Activated CD4-positive, alpha-beta memory T cell treated with anti-CD3 and anti-CD28 coated beads for 36 hours (primary cell): ENCODE measurements at regions of chr1 and their contacts with region 1.

Region 1: GRCh38 chr1:98813738-98814309 is 152.3 kb downstream of the SNX7 start:
- DNase-seq: no peak
- H3K4me3 Mint-ChIP-seq: peak overlapping the region; percentile 3
- H3K27ac Mint-ChIP-seq: peak overlapping the region; percentile 15
- H3K4me1 Mint-ChIP-seq: peaks cover 16% of the 10 kb centered on the region
- H3K27me3 Mint-ChIP-seq: no peaks in the 10 kb centered on the region

Region 2: DNA sequence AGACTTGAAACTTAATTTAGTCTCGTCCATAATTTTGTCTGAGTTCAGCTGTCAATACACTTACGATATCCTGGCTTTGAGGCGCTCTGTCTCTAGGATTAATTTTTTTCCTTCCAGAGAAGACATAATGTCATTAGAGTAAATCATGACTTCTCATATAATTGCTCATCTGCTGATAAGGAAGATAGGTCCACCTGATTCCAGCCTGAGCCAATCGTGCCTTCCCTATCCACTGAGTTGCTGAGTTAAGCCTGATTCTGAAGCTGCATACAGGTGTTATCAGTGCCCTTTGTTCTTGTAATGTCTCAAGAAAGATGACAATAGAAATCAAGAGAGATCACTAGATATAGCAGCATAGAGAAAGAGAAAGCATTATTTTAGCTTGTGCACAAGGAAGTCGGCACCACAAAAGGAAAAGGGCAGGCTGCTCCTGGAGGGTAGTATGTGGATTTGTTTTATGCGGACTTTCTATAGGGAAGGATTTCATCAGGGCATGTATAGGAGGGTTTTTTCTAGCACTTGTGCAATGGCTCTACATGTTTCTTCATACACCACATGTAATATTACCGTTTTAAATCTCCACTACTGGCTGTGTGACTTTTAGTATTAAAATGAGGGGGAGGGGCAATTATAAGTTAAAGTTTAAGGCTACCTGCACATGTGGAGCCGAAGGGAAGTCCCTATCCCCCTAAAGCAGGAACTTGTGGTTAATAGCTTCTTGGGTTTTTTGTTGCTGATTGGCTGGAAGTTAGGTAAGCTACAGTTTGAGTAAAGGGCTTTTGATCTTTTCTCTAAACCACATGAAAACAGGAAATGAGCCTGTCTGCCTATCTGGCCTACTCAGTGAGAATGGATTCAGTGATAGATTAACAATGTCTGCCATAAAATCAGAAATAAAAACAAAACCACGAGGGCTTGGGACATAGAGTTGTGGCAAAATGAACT is 57.4 kb after region 1 on chr1:
- CTCF ChIA-PET with region 1: no interaction called
- POLR2A ChIA-PET with region 1: no interaction called
- intact Hi-C with region 1: loop called (anchors 1 kb)
- DNase-seq: peak; percentile 31
- H3K4me3 Mint-ChIP-seq: peak overlapping the region; percentile 65
- H3K27ac Mint-ChIP-seq: peak overlapping the region; percentile 94
- H3K4me1 Mint-ChIP-seq: peaks cover 21% of the 10 kb centered on the region
- H3K27me3 Mint-ChIP-seq: no peaks in the 10 kb centered on the region

Region 3: DNA sequence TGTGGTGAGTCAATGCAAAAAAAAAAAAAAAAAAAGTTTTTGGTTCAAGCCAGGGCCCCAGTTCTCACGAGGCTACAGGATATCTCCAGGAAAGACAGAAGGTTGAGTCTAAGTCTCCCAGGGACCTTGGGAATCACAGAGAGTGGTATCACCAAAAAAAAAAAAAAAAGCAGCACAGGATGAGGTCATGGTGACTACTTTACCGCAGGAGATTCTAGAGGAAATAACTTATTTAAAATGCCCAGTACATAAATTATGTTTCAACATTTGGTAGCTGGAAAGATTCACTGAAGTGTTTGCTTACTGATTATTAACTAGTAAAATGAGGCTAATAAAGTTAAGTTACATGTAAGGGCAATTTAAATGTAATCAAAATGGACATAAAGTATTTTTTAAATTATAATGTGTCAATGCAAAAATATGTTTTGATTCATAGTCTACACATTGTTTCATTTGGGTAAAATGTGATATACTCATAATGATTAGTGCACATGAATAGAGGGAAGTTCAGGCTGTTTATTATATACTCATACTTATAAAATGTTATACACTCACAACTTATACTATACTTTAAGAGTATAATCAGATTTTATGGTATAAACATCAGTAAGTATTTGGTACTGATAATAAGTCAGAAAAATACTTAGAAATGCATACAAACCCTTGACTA is 106.8 kb after region 1 on chr1:
- CTCF ChIA-PET with region 1: no interaction called
- POLR2A ChIA-PET with region 1: no interaction called
- intact Hi-C with region 1: no loop called
- DNase-seq: no peak
- H3K4me3 Mint-ChIP-seq: no peak overlapping the region
- H3K27ac Mint-ChIP-seq: no peak overlapping the region
- H3K4me1 Mint-ChIP-seq: peaks cover 2% of the 10 kb centered on the region
- H3K27me3 Mint-ChIP-seq: no peaks in the 10 kb centered on the region

Region 4: GRCh38 chr1:98965394-98965793 is 151.6 kb after region 1 on chr1:
- CTCF ChIA-PET with region 1: no interaction called
- POLR2A ChIA-PET with region 1: no interaction called
- intact Hi-C with region 1: loop called (anchors 5 kb)
- DNase-seq: no peak
- H3K4me3 Mint-ChIP-seq: no peak overlapping the region
- H3K27ac Mint-ChIP-seq: no peak overlapping the region
- H3K4me1 Mint-ChIP-seq: peaks cover 2% of the 10 kb centered on the region
- H3K27me3 Mint-ChIP-seq: peaks cover 2% of the 10 kb centered on the region